Activated CD4-positive, alpha-beta T cell treated with anti-CD3 and anti-CD28 coated beads for 36 hours (primary cell): ENCODE measurements at regions of chr3 and their contacts with region 1.

Region 1: GRCh38 chr3:113287803-113288648 is 76.7 kb downstream of the BOC start:
- DNase-seq: peak; percentile 67
- ATAC-seq: no peak
- H3K4me3 Mint-ChIP-seq: no peak overlapping the region
- H3K27ac Mint-ChIP-seq: no peak overlapping the region
- H3K4me1 Mint-ChIP-seq: peaks cover 6% of the 10 kb centered on the region
- H3K27me3 Mint-ChIP-seq: no peaks in the 10 kb centered on the region

Region 2: DNA sequence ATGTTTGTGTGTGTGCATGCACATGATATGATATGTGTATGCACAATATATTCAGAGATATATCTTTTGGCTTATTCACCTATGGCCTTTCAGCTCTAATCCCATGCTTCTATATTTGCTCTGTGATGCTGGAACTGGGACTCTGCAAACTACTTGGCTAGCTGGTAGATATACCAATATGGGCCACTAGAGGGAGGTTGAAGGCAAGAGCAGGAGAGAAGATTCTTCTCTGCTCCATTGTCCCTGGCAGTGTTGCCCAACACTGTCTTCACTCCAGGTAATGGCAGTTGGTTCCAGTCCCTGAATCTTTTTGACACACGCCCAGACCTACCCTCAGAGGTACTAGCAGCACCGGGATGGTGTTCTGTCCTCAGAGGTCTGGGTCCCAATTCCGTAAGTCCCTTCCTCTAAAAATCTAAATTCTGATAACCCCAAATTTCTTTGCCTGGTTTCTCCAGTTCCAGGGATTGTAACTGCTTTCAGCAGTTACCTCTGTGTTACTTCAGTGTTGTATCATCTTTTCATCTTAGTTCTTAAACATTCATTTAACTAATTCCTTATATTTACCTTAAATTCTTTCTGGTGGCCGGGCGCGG is 252.5 kb before region 1 on chr3:
- CTCF ChIA-PET with region 1: interaction called, 12 read pairs
- POLR2A ChIA-PET with region 1: no interaction called
- intact Hi-C with region 1: no loop called
- DNase-seq: peak; percentile 31
- ATAC-seq: peak; percentile 73
- H3K4me3 Mint-ChIP-seq: no peak overlapping the region
- H3K27ac Mint-ChIP-seq: no peak overlapping the region
- H3K4me1 Mint-ChIP-seq: no peaks in the 10 kb centered on the region
- H3K27me3 Mint-ChIP-seq: no peaks in the 10 kb centered on the region

Region 3: DNA sequence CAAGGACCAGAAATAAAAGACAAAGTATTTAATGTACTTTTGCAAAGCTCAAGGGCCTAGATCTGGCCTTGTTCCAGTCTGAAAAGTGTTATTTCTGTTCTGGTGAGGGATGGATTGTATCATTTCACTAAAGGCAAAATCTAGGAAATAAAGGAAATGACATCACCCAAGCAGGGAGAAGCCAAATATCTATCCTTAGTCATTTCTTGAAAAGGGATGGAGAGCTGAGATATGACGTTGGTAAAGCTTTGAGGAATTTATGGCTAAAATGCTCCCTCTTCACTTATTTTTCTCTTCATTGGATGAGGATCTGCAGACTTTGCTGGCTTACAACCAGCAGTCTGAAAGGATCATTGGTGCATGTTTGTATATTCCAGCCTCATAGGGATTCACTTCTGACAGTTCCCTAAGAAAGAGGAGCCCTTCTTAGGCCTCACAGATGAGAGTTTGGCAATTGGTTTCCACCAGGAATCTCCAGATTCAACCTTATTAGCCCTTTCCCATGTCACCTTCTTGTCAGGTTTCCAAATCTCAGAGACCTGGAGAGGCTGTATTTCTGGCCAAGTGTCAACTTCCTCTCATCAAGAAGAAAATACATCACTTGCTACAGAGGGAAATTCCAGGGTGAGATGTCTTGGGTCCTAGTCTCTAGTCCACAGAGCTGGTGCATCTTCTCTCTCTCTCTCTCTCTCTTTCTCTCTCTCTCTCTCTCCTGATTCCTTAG is 170.4 kb before region 1 on chr3:
- CTCF ChIA-PET with region 1: no interaction called
- POLR2A ChIA-PET with region 1: no interaction called
- intact Hi-C with region 1: no loop called
- DNase-seq: no peak
- ATAC-seq: no peak
- H3K4me3 Mint-ChIP-seq: no peak overlapping the region
- H3K27ac Mint-ChIP-seq: no peak overlapping the region
- H3K4me1 Mint-ChIP-seq: peaks cover 14% of the 10 kb centered on the region
- H3K27me3 Mint-ChIP-seq: no peaks in the 10 kb centered on the region

Region 4: GRCh38 chr3:113136071-113136470 is 152.0 kb before region 1 on chr3:
- CTCF ChIA-PET with region 1: interaction called, 15 read pairs
- POLR2A ChIA-PET with region 1: no interaction called
- intact Hi-C with region 1: loop called (anchors 1 kb)
- DNase-seq: no peak
- ATAC-seq: no peak
- H3K4me3 Mint-ChIP-seq: no peak overlapping the region
- H3K27ac Mint-ChIP-seq: no peak overlapping the region
- H3K4me1 Mint-ChIP-seq: peaks cover 2% of the 10 kb centered on the region
- H3K27me3 Mint-ChIP-seq: no peaks in the 10 kb centered on the region

Region 5: DNA sequence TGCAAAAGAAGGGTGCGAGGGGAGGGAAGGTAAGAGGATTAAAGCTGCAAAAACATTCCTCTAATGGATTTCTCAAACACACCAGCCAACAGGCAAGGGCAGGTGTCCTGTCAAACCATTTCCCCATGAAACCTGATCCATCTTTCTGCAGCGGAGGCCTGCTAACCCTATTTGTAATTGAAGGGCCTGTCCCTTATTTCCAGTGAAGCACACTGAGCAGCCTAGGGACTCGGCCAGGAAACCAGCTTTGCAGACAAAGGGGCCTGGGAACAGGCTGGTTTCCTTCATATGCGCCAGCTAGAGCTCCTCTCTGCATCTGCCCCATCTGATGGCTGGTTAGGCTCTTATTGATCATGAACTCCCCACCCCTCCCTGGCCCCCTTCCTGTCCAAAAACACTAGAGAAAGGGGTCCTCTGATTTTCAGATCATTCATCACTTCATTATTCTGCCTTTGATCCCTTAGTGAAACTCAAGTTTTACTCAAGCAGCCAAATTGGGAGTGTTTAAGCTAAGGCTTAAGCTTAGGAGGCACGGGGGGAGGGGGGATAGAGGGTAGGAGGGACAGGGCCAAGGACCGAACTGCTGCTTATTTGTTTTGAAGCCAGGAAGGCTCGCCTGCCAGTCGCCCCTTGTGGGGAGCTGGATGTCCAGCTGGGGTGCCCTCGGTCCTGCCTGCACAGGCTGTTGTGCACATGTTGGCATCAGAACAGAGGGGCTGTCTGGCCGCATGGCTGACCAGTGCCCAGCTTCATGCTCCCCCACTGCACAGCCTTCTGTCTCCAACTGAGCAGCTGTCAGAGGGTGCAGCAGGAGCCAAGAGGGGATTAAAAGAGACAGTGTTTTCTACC is 23.5 kb before region 1 on chr3:
- CTCF ChIA-PET with region 1: interaction called, 16 read pairs
- POLR2A ChIA-PET with region 1: no interaction called
- intact Hi-C with region 1: no loop called
- DNase-seq: no peak
- ATAC-seq: no peak
- H3K4me3 Mint-ChIP-seq: no peak overlapping the region
- H3K27ac Mint-ChIP-seq: no peak overlapping the region
- H3K4me1 Mint-ChIP-seq: no peaks in the 10 kb centered on the region
- H3K27me3 Mint-ChIP-seq: no peaks in the 10 kb centered on the region

Region 6: GRCh38 chr3:113275929-113276750 is 11.9 kb before region 1 on chr3:
- CTCF ChIA-PET with region 1: interaction called, 17 read pairs
- POLR2A ChIA-PET with region 1: no interaction called
- intact Hi-C with region 1: no loop called
- DNase-seq: no peak
- ATAC-seq: peak; percentile 44
- H3K4me3 Mint-ChIP-seq: no peak overlapping the region
- H3K27ac Mint-ChIP-seq: no peak overlapping the region
- H3K4me1 Mint-ChIP-seq: peaks cover 5% of the 10 kb centered on the region
- H3K27me3 Mint-ChIP-seq: no peaks in the 10 kb centered on the region